ENCODE measurements at regions of chr1 and their contacts with region 1.

Region 1: GRCh38 chr1:112735752-112736151 is 20.6 kb upstream of the PPM1J start:
- DNase-seq: peak in 1 of 5 donors; percentile 0
- H3K4me3 ChIP-seq: no peak overlapping the region
- H3K27ac ChIP-seq: no peak overlapping the region
- H3K4me1 ChIP-seq: no peaks in the 10 kb centered on the region
- H3K27me3 ChIP-seq: no peaks in the 10 kb centered on the region
- CTCF ChIP-seq: no peak

Region 2: DNA sequence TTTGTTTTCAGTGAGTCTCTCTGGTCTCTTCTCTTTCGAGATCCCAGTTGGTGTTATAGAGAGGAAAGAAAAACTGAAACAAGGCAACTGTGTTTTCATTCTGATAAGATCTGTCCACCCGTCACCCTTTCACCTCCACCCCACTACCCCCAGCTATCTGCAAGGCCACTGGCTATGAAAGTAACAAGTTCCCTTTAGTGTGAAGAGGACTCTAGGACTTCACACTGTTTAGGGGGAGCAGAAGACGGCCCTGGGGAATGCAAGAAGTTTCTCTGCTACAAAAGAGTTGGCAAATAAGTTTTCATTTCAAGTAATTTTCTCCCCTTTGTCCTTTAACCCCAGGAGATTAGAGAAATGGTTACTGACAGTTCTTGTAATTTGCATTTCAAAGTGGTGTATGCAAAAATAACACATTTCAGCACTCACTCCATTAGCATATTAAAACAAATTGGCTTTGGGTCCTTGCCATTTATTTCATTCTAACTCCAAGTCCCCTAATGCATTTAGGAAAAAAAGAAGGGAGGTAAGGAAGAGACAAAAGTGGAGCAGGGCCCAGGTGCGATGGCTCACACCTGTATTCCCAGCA is 59.0 kb after region 1 on chr1:
- intact Hi-C with region 1: loop called (anchors 10 kb)
- DNase-seq: no peak
- H3K4me3 ChIP-seq: no peak overlapping the region
- H3K27ac ChIP-seq: no peak overlapping the region
- H3K4me1 ChIP-seq: no peaks in the 10 kb centered on the region
- H3K27me3 ChIP-seq: no peaks in the 10 kb centered on the region
- CTCF ChIP-seq: no peak